ENCODE measurements at regions of chr17 and their contacts with region 1.

Region 1: GRCh38 chr17:47895856-47896671 is at the start of gene SP2:
- DNase-seq: peak; percentile 100
- H3K4me3 Mint-ChIP-seq: peak within 1 kb of the TSS; percentile 82
- H3K27ac Mint-ChIP-seq: peak within 1 kb of the TSS; percentile 99
- H3K4me1 Mint-ChIP-seq: peaks cover 24% of the 10 kb centered on the region
- H3K27me3 Mint-ChIP-seq: peaks cover 12% of the 10 kb centered on the region
- CTCF ChIP-seq: no peak
- total RNA-seq, gene SP2: 21.5 and 22.4 TPM in 2 replicates

Region 2: GRCh38 chr17:47810205-47810821 is 85.8 kb before region 1 on chr17:
- CTCF ChIA-PET with region 1: no interaction called
- intact Hi-C with region 1: no loop called
- DNase-seq: peak; percentile 81
- H3K4me3 Mint-ChIP-seq: peak overlapping the region; percentile 26
- H3K27ac Mint-ChIP-seq: peak overlapping the region; percentile 61
- H3K4me1 Mint-ChIP-seq: peaks cover 34% of the 10 kb centered on the region
- H3K27me3 Mint-ChIP-seq: no peaks in the 10 kb centered on the region
- CTCF ChIP-seq: no peak

Region 3: DNA sequence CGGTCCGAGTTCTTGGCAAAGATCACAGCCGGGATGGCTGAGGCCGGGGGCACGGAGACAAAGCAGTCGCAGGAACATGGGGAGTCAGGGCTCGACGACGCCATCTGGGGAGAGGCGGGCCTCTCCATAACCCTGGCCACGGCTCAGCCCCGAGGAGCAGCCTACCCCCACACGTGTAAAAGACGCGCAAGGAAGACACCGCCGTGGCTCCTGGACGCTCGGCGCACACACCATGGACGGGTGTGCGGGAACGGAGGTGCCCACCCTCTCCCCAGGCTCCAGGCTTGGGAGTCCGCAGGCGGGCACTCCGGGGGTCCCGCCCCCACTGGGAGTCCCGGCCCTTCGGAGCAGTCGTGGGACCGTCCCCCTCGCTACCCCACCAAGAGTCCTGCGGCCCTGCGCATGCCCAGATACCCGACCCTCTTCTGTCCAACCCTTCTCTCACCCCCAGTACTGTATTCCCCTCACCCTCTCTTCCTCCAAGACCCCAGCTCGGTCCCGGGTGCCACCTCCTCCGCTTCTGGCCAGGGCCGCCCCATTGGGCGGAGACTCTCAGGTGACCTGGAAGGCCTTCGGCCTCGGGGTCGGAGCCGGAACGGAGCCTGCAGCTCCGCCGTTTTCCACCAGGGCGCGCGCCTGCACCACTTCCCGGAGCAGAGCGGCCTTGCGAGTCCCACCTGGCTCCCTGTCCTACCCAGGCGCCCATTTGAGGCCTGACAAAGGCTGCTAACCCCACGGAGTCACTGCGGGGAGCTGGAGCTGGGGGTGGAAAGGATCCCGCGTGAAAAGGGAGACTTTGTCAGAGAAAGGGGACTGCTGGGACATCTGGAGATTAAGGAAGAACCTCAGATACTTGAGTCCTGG is 55.1 kb before region 1 on chr17 and contains the start of gene SCRN2:
- CTCF ChIA-PET with region 1: interaction called, 137 read pairs
- intact Hi-C with region 1: no loop called
- DNase-seq: peak; percentile 98
- H3K4me3 Mint-ChIP-seq: peak within 1 kb of the TSS; percentile 92
- H3K27ac Mint-ChIP-seq: peak within 1 kb of the TSS; percentile 31
- H3K4me1 Mint-ChIP-seq: peaks cover 26% of the 10 kb centered on the region
- H3K27me3 Mint-ChIP-seq: no peaks in the 10 kb centered on the region
- CTCF ChIP-seq: peak; percentile 99
- total RNA-seq, gene SCRN2: 34.8 and 37.0 TPM in 2 replicates

Region 4: GRCh38 chr17:47970704-47971463 is 74.8 kb after region 1 on chr17 and contains the start of gene CDK5RAP3:
- CTCF ChIA-PET with region 1: interaction called, 10 read pairs
- intact Hi-C with region 1: no loop called
- DNase-seq: peak; percentile 100
- H3K4me3 Mint-ChIP-seq: peak within 1 kb of the TSS; percentile 94
- H3K27ac Mint-ChIP-seq: peak within 1 kb of the TSS; percentile 19
- H3K4me1 Mint-ChIP-seq: peaks cover 32% of the 10 kb centered on the region
- H3K27me3 Mint-ChIP-seq: no peaks in the 10 kb centered on the region
- CTCF ChIP-seq: peak; percentile 100
- total RNA-seq, gene CDK5RAP3: 431 and 457 TPM in 2 replicates